ENCODE measurements at regions of chr15 and their contacts with region 1.

Region 1: DNA sequence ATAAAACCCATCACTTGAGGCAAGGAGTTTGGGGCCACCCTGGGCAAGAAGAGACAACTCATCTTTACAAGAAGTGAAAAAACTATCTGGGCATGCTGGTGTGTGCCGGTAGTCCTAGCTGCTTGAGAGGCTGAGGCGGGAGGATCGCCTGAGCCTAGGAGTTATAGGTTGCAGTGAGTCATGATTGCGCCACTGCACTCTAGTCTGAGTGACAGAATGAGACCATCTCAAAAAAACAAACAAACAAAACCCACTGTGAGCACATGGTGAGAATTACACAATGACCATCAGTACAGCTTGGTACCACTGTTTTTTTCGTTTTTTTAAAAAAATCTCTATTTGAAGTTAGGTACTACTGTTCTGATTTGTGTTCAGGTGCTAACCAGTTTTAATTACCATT is 13.6 kb downstream of the VPS39 start:
- DNase-seq: peak; percentile 71
- H3K4me3 Mint-ChIP-seq: no peak overlapping the region
- H3K27ac Mint-ChIP-seq: peak overlapping the region; percentile 94
- H3K4me1 Mint-ChIP-seq: peaks cover 63% of the 10 kb centered on the region
- H3K27me3 Mint-ChIP-seq: no peaks in the 10 kb centered on the region

Region 2: DNA sequence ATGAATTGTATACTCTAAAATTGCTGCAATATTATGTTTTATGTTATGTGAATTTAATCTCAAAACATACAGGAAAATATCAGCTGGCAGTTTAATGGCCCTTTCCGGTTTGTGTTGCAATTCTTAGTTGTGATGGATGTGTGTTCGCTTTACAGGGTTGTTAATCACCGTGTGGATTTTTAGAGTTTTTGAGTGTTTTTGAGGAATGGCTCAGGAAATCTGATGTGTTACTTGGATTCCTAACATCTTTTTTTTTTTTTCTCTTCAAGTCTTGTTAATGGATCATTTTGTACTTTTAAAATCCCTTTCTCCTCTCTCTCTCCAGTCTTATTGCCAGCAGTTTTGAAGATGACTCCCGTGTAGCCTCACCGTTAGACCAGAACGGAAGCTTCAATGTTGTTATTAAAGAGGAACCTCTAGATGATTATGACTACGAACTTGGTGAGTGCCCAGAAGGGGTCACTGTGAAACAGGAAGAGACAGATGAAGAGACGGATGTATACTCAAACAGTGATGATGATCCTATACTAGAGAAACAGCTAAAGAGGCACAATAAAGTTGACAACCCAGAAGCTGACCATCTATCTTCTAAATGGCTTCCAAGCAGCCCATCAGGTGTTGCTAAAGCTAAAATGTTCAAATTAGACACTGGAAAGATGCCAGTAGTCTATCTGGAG is 498.6 kb before region 1 on chr15:
- CTCF ChIA-PET with region 1: no interaction called
- intact Hi-C with region 1: loop called (anchors 2 kb)
- DNase-seq: peak; percentile 78
- H3K4me3 Mint-ChIP-seq: peak overlapping the region; percentile 22
- H3K27ac Mint-ChIP-seq: peak overlapping the region; percentile 76
- H3K4me1 Mint-ChIP-seq: peaks cover 48% of the 10 kb centered on the region
- H3K27me3 Mint-ChIP-seq: no peaks in the 10 kb centered on the region

Region 3: GRCh38 chr15:42010434-42010833 is 184.1 kb before region 1 on chr15:
- CTCF ChIA-PET with region 1: no interaction called
- intact Hi-C with region 1: loop called (anchors 2 kb)
- DNase-seq: peak; percentile 61
- H3K4me3 Mint-ChIP-seq: no peak overlapping the region
- H3K27ac Mint-ChIP-seq: peak overlapping the region; percentile 38
- H3K4me1 Mint-ChIP-seq: peaks cover 25% of the 10 kb centered on the region
- H3K27me3 Mint-ChIP-seq: no peaks in the 10 kb centered on the region

Region 4: DNA sequence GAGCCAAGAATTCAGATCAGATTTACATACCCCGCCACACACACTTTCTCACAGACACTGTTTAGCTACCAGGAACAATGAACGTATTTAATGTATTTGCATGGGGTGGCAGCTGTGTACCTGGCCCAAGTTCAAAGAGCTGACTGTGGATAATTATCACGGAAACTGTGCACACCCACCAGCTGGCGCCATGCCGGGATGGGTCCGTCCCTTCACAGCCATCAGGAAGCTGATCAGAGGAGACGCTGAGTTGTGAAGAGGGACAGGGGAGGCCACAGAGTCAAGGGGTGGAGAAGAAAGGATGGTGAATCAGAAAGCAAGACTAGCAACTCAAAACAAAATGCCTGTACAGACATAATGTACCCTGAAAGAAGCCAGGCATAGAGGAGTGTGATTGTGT is 87.0 kb before region 1 on chr15:
- CTCF ChIA-PET with region 1: no interaction called
- intact Hi-C with region 1: loop called (anchors 1 kb)
- DNase-seq: peak; percentile 89
- H3K4me3 Mint-ChIP-seq: no peak overlapping the region
- H3K27ac Mint-ChIP-seq: peak overlapping the region; percentile 22
- H3K4me1 Mint-ChIP-seq: peaks cover 22% of the 10 kb centered on the region
- H3K27me3 Mint-ChIP-seq: peaks cover 16% of the 10 kb centered on the region

Region 5: GRCh38 chr15:42182961-42183360 is 11.5 kb before region 1 on chr15:
- CTCF ChIA-PET with region 1: no interaction called
- intact Hi-C with region 1: no loop called
- DNase-seq: no peak
- H3K4me3 Mint-ChIP-seq: no peak overlapping the region
- H3K27ac Mint-ChIP-seq: peak overlapping the region; percentile 34
- H3K4me1 Mint-ChIP-seq: no peaks in the 10 kb centered on the region
- H3K27me3 Mint-ChIP-seq: no peaks in the 10 kb centered on the region

Region 6: GRCh38 chr15:42215913-42216829 is 21.7 kb after region 1 on chr15:
- CTCF ChIA-PET with region 1: interaction called, 4 read pairs
- intact Hi-C with region 1: loop called (anchors 1 kb)
- DNase-seq: no peak
- H3K4me3 Mint-ChIP-seq: no peak overlapping the region
- H3K27ac Mint-ChIP-seq: peak overlapping the region; percentile 59
- H3K4me1 Mint-ChIP-seq: peaks cover 30% of the 10 kb centered on the region
- H3K27me3 Mint-ChIP-seq: no peaks in the 10 kb centered on the region

Region 7: DNA sequence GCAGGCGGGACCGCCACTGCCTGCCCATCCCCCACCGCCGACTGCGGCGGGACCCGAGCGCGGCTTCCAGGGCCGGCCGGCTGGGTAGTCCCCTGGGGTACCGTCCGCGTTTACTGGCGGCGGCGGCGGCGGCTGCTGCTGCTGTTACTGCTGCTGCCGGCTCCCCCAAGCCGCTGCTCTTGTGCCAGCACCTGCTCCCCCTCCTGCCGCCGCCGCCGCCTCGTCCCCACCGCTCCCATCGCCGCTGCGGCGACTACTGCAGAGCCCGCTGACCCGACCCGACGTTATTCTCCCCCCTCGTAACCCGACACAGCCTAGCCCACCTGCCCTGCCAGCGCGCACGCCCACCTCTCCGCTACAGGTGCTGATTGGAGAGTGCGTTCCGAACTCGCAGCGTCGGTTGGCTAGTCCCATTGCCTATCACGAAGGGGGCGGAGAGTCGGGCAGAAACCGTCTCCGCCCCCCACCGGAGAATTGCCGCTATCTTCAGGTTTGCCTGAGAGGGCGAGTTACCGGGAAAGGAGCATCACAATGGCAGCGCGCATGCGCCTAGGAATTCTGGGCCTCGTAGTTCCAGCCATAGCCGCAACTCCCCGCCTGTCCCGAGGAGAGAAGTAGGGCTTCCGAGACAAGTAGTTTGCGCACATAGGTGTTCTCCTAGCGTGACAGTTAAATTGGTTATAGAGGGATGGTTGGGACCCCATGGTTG is 726.2 kb after region 1 on chr15 and contains the start of gene TTBK2:
- CTCF ChIA-PET with region 1: no interaction called
- intact Hi-C with region 1: loop called (anchors 5 kb)
- DNase-seq: peak; percentile 98
- H3K4me3 Mint-ChIP-seq: peak within 1 kb of the TSS; percentile 99
- H3K27ac Mint-ChIP-seq: peak within 1 kb of the TSS; percentile 92
- H3K4me1 Mint-ChIP-seq: peaks cover 22% of the 10 kb centered on the region
- H3K27me3 Mint-ChIP-seq: no peaks in the 10 kb centered on the region
- total RNA-seq, gene TTBK2: 13.5 to 15.7 TPM